ENCODE measurements at regions of chr1 and their contacts with region 1.

Region 1: GRCh38 chr1:113072757-113073478 is at the start of gene LRIG2:
- DNase-seq: peak; percentile 99
- H3K4me3 Mint-ChIP-seq: peak within 1 kb of the TSS; percentile 96
- H3K27ac Mint-ChIP-seq: peak within 1 kb of the TSS; percentile 93
- H3K4me1 Mint-ChIP-seq: peaks cover 32% of the 10 kb centered on the region
- H3K27me3 Mint-ChIP-seq: no peaks in the 10 kb centered on the region
- total RNA-seq, gene LRIG2: 13.0 to 13.8 TPM

Region 2: GRCh38 chr1:112803906-112804762 is 268.8 kb before region 1 on chr1:
- CTCF ChIA-PET with region 1: interaction called, 10 read pairs
- POLR2A ChIA-PET with region 1: no interaction called
- DNase-seq: peak; percentile 59
- H3K4me3 Mint-ChIP-seq: no peak overlapping the region
- H3K27ac Mint-ChIP-seq: no peak overlapping the region
- H3K4me1 Mint-ChIP-seq: no peaks in the 10 kb centered on the region
- H3K27me3 Mint-ChIP-seq: peaks cover 7% of the 10 kb centered on the region

Region 3: DNA sequence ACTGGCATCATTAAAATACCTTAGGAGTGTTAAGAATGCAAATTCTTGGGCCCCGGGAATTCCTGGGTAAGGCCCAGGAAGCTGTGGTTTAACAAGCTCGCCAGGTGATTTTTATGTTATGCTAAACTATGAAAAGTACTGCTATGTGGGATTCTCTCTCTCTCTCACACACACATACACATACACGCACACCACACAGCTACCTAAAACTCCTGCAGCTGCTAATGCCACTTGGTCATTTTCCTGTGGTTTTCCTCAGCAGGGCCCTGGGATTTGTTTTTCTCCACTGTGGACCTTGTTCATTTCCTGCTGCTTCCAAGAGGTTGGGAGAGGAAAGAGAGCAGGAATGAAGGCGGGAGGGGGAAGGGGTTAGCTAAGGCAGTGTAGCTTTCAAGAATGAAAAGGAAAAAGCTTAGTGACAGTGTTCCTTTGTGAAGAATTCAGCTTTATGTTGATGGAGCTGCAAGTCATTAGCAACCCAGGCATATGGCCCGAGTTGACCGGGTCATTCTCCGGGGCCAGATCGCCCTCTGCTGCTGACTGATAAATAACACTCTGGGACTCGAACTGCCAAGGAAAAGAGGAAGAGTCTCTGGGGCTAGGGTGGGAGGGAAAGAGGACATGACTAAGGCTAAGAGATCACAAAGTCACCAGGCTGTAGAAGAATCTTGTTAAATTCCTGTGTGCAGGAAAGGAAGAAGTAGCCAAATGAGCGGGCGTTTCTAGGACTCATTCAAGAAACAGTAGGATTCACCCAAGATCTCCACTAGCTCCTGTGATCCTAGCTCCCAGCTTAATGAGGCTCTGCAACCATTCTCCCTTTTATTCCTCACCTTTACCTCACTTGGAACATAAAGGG is 30.4 kb before region 1 on chr1:
- CTCF ChIA-PET with region 1: interaction called, 13 read pairs
- POLR2A ChIA-PET with region 1: no interaction called
- DNase-seq: peak; percentile 20
- H3K4me3 Mint-ChIP-seq: no peak overlapping the region
- H3K27ac Mint-ChIP-seq: peak overlapping the region; percentile 10
- H3K4me1 Mint-ChIP-seq: peaks cover 35% of the 10 kb centered on the region
- H3K27me3 Mint-ChIP-seq: no peaks in the 10 kb centered on the region

Region 4: GRCh38 chr1:113088972-113089371 is 16.1 kb after region 1 on chr1:
- CTCF ChIA-PET with region 1: interaction called, 21 read pairs
- POLR2A ChIA-PET with region 1: no interaction called
- DNase-seq: no peak
- H3K4me3 Mint-ChIP-seq: no peak overlapping the region
- H3K27ac Mint-ChIP-seq: no peak overlapping the region
- H3K4me1 Mint-ChIP-seq: peaks cover 12% of the 10 kb centered on the region
- H3K27me3 Mint-ChIP-seq: no peaks in the 10 kb centered on the region

Region 5: GRCh38 chr1:113255720-113256347 is 182.9 kb after region 1 on chr1:
- CTCF ChIA-PET with region 1: no interaction called
- POLR2A ChIA-PET with region 1: no interaction called
- DNase-seq: no peak
- H3K4me3 Mint-ChIP-seq: no peak overlapping the region
- H3K27ac Mint-ChIP-seq: no peak overlapping the region
- H3K4me1 Mint-ChIP-seq: no peaks in the 10 kb centered on the region
- H3K27me3 Mint-ChIP-seq: peaks cover 9% of the 10 kb centered on the region